ENCODE measurements at regions of chr15 and their contacts with region 1.

Region 1: DNA sequence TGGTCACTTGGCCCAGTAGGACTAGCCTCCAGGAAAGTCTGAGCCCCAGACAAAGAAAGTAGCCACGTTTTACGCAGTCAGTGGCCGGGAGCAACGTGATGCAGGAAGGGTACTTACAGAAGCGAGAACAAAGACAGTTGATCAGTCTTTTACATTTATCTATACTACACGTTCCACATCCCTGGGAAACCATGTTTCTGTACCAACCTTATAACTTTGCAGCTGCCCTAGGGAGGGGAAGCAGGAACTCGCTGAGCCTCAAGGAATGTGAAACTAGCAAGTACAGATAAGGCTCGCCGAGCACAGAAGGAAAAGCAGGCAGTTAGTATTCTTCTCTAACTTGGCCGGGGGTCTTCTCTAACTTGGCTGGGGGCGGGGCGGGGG is 3.4 kb upstream of the KNL1 start:
- DNase-seq: no peak
- ATAC-seq: no peak
- H3K4me3 Mint-ChIP-seq: peak overlapping the region; percentile 83
- H3K27ac Mint-ChIP-seq: peak overlapping the region; percentile 69
- H3K4me1 Mint-ChIP-seq: peaks cover 20% of the 10 kb centered on the region
- H3K27me3 Mint-ChIP-seq: peaks cover 20% of the 10 kb centered on the region

Region 2: GRCh38 chr15:40543631-40544294 is 46.9 kb before region 1 on chr15:
- POLR2A ChIA-PET with region 1: no interaction called
- DNase-seq: no peak
- ATAC-seq: no peak
- H3K4me3 Mint-ChIP-seq: no peak overlapping the region
- H3K27ac Mint-ChIP-seq: no peak overlapping the region
- H3K4me1 Mint-ChIP-seq: peaks cover 7% of the 10 kb centered on the region
- H3K27me3 Mint-ChIP-seq: no peaks in the 10 kb centered on the region

Region 3: DNA sequence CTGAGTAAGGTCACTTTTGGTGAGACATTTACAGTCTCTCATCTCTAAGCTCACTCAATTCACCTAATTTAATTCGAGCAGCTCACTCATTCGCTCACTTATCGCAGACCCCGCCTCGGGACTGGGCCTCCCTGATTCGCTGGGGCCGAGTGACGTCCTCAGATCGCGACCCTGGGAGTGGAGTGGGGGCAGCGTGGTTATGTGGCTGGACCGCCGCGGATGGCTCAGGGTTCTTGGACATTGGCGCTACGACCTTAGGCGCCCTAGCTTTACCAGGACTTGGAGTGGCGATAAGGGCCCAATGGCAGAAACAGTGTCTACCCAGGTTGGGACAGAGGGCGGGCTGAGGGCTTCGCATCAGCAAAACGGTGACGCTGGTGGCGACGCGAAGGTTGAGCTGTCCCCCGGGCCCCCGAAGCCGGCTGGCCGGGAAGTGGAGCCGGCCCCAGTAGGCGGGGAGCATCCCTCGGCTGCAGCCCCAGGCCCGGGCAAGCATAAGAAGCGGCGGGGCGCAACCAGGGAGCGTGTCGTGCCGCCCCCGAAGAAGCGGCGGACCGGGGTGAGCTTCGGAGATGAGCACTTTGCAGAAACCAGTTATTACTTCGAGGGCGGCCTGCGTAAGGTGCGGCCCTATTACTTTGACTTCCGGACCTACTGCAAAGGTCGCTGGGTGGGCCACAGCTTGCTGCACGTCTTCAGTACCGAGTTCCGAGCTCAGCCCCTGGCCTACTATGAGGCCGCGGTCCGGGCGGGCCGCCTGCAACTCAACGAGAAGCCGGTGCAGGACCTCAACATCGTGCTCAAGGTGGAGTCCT is 21.3 kb before region 1 on chr15 and contains the start of gene RPUSD2:
- POLR2A ChIA-PET with region 1: interaction called, 18 read pairs
- DNase-seq: peak; percentile 94
- ATAC-seq: peak; percentile 65
- H3K4me3 Mint-ChIP-seq: peak within 1 kb of the TSS; percentile 96
- H3K27ac Mint-ChIP-seq: peak within 1 kb of the TSS; percentile 98
- H3K4me1 Mint-ChIP-seq: peaks cover 30% of the 10 kb centered on the region
- H3K27me3 Mint-ChIP-seq: peaks cover 6% of the 10 kb centered on the region
- total RNA-seq, gene RPUSD2: 15.8 to 17.7 TPM

Measured in activated naive CD8-positive, alpha-beta T cell treated with anti-CD3 and anti-CD28 coated beads, Interleukin-2, amount 10 ng/mL, durations not matched to agents 7 days and 5 days (primary cell).